Aorta (tissue), 5 donors: ENCODE measurements at regions of chr17 and their contacts with region 1.

Region 1: GRCh38 chr17:39026980-39027451 is 59.8 kb upstream of the FBXO47 start:
- DNase-seq: peak; percentile 68 to 88
- ATAC-seq: peak; percentile 80
- H3K4me3 ChIP-seq: peak overlapping the region; percentile 44 to 47
- H3K27ac ChIP-seq: no peak overlapping the region
- H3K4me1 ChIP-seq: no peaks in the 10 kb centered on the region
- H3K27me3 ChIP-seq: no peaks in the 10 kb centered on the region

Region 2: GRCh38 chr17:39123627-39124026 is 96.6 kb after region 1 on chr17:
- intact Hi-C with region 1: loop called in 1 of 2 experiments (anchors 10 kb)
- DNase-seq: no peak
- ATAC-seq: peak; percentile 11
- H3K4me3 ChIP-seq: no peak overlapping the region
- H3K27ac ChIP-seq: no peak overlapping the region
- H3K4me1 ChIP-seq: no peaks in the 10 kb centered on the region
- H3K27me3 ChIP-seq: no peaks in the 10 kb centered on the region